GM18951 (cell line): ENCODE measurements at regions of chr4 and their contacts with region 1.

Region 1: DNA sequence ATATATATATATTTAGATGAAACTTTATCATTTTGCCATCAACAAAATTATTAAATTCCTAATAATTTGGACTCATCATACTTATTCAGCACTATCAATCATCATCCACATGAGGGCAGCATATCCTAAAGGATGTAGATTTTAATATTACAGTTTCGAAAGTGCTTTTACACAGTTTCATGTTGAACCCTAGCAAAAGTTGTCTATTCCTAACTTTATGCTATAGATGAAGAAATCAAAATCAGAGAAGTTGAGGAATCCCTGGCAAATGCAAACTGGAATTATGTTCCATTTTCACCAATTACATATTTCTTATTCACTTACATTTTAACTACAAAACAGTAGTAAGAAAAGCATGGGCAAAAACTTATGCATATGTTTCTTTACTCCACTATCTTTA is 36.6 kb upstream of the UGT2A1 start:
- POLR2A ChIP-seq: no peak

Region 2: DNA sequence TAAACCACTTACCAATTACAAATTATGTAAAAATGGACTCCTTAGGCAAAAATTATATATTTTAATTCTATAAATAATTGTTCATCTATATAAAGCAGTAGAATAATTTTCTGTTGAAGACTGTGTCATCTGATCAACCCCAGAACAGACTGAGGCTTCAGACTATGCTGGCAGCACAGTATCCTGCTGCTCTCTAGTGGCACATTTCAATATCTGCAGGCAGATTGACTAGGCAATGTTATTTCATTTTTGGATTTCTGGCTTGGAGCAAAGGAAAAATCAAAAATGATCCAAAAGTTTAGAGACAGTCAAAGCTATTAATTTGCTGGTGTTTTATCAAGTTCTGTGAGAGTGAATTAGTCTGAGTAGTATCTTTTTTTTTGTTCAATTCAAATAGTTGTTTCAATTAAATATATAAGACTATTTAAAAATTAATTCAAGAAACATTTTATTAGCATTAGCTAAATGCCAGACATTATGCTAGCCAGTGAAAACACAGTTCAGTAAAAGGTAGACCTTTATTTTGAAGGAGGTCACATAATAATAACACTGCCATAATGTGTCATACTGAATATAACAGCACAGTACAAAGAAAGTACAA is 191.7 kb after region 1 on chr4:
- in situ Hi-C with region 1: loop called (anchors 10 kb)
- POLR2A ChIP-seq: no peak

Region 3: GRCh38 chr4:69910016-69910782 is 220.6 kb after region 1 on chr4:
- in situ Hi-C with region 1: no loop called
- POLR2A ChIP-seq: no peak

Region 4: DNA sequence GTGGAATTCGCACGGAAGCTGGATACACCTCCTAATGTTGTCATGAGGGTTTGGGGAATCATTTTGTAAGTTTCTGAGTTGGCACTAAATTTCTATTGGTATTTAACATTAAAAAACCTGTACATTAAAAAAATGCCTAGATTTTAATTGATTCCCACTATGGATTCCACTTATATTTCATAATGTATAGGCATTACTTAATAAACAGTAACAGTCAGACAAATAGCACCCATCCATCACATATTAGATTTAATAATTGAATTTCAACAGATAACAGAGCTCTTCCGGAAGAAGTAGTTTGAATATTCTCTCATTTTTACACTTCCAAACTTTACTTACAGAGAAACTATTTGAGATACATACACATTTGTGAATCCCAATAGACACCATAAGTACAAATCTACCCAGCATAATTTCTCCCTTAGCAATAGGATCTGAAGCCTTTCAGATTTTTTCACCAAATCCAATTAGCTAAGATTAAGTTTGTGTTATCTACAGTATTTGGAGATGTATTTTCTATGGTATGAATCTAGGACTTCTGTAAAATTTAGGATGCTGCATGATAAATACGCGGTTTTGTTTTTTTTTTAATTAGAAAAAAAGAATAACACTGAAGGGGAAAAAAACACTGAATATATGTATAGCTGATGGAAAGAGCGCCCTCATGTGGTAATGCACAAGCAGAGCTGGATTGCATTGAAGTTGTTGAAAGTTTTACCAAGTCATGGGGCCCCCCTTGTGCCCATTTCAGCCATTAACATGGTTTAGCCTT is 493.8 kb after region 1 on chr4:
- in situ Hi-C with region 1: loop called (anchors 25 kb)
- POLR2A ChIP-seq: no peak

Region 5: GRCh38 chr4:70505151-70505748 is 815.7 kb after region 1 on chr4:
- in situ Hi-C with region 1: loop called (anchors 25 kb)
- POLR2A ChIP-seq: no peak